Caco-2 (cell line): ENCODE measurements at regions of chr1 and their contacts with region 1.

Region 1: DNA sequence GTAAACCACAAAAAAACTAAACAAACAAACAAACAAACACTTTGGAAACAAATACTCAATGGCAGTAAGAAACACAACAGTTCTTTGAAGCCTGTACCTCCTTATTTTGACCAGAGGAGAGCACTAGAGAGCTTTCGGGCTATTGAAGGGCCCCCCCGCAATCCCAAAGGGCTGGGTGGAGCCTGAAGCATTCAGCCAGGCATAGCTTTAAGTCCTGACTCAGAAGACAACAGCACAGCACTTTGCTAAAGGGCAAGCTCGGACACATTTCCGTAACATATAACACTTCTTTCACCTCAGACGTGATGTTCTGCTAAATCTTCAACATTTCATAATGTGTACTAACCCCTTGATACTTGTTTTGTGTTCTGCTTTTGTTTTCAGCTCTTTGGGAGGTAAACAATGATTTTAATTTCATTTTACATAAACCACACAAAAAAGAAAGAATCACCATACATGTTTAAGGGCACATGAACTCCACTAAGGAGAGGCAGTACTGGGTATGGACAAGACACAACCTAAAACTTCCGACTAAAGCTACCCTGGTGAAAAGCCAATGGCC is 9.7 kb upstream of the SHCBP1L start:
- DNase-seq: peak; percentile 78 to 81
- H3K4me3 ChIP-seq: peak overlapping the region; percentile 21; the same call in 1 of the 2 replicates
- H3K4me3 Mint-ChIP-seq: peak overlapping the region; percentile 55
- H3K27ac Mint-ChIP-seq: peak overlapping the region; percentile 58
- H3K4me1 ChIP-seq: peaks cover 36% of the 10 kb centered on the region
- H3K4me1 Mint-ChIP-seq: peaks cover 14% of the 10 kb centered on the region
- H3K27me3 ChIP-seq: no peaks in the 10 kb centered on the region
- H3K27me3 Mint-ChIP-seq: no peaks in the 10 kb centered on the region
- CTCF ChIP-seq: peak; percentile 90 to 93

Region 2: GRCh38 chr1:182731852-182732545 is 230.6 kb before region 1 on chr1:
- CTCF ChIA-PET with region 1: no interaction called
- POLR2A ChIA-PET with region 1: no interaction called
- intact Hi-C with region 1: no loop called
- DNase-seq: peak in 1 of 2 experiments; percentile 18
- H3K4me3 ChIP-seq: no peak overlapping the region
- H3K4me3 Mint-ChIP-seq: no peak overlapping the region
- H3K27ac Mint-ChIP-seq: no peak overlapping the region
- H3K4me1 ChIP-seq: no peaks in the 10 kb centered on the region
- H3K4me1 Mint-ChIP-seq: peaks cover 7% of the 10 kb centered on the region
- H3K27me3 ChIP-seq: no peaks in the 10 kb centered on the region; the same call in 1 of the 2 replicates
- H3K27me3 Mint-ChIP-seq: peaks cover 4% of the 10 kb centered on the region
- CTCF ChIP-seq: no peak

Region 3: DNA sequence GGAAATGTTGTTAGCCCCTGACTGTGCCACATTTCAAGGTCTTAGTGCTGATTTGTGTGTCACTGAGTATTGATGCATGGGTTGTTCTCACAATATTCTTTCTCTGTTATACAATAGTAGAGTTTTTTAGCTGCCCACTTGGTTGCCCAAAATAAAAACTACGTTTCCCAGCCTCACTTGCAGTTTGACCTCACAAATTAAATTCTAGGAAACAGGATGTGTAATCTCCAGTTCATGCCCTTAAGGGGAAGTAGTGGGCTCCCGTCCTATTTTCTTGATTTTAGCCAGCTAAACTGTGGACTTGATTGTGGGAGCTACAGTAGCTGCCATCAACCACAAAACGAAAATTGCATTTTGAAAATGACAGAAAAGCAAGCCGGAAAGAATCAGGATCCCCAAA is 33.3 kb after region 1 on chr1:
- CTCF ChIA-PET with region 1: no interaction called
- POLR2A ChIA-PET with region 1: no interaction called
- intact Hi-C with region 1: no loop called
- DNase-seq: no peak
- H3K4me3 ChIP-seq: no peak overlapping the region
- H3K4me3 Mint-ChIP-seq: no peak overlapping the region
- H3K27ac Mint-ChIP-seq: no peak overlapping the region
- H3K4me1 ChIP-seq: peaks cover 5% of the 10 kb centered on the region; the same call in 1 of the 2 replicates
- H3K4me1 Mint-ChIP-seq: no peaks in the 10 kb centered on the region
- H3K27me3 ChIP-seq: no peaks in the 10 kb centered on the region
- H3K27me3 Mint-ChIP-seq: no peaks in the 10 kb centered on the region
- CTCF ChIP-seq: no peak

Region 4: DNA sequence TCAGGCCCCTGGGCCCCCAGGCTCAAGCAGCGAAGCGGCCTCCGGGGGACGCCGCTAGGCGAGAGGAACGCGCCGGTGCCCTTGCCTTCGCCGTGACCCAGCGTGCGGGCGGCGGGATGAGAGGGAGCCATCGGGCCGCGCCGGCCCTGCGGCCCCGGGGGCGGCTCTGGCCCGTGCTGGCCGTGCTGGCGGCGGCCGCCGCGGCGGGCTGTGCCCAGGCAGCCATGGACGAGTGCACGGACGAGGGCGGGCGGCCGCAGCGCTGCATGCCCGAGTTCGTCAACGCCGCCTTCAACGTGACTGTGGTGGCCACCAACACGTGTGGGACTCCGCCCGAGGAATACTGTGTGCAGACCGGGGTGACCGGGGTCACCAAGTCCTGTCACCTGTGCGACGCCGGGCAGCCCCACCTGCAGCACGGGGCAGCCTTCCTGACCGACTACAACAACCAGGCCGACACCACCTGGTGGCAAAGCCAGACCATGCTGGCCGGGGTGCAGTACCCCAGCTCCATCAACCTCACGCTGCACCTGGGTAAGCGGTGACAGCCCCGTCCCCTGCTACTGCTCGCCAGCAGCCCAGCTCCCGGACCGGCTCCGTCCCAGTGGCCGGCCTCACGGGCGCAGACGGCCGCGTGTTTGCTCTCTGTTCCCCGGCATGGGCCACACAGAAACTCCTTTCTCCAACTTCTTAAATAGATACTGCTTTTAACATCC is 61.1 kb after region 1 on chr1:
- CTCF ChIA-PET with region 1: interaction called, 16 read pairs
- POLR2A ChIA-PET with region 1: interaction called, 3 read pairs
- intact Hi-C with region 1: loop called (anchors 1 kb)
- DNase-seq: peak; percentile 93
- H3K4me3 ChIP-seq: peak overlapping the region; percentile 92
- H3K4me3 Mint-ChIP-seq: peak overlapping the region; percentile 97
- H3K27ac Mint-ChIP-seq: peak overlapping the region; percentile 90
- H3K4me1 ChIP-seq: peaks cover 50% of the 10 kb centered on the region
- H3K4me1 Mint-ChIP-seq: peaks cover 33% of the 10 kb centered on the region
- H3K27me3 ChIP-seq: no peaks in the 10 kb centered on the region
- H3K27me3 Mint-ChIP-seq: no peaks in the 10 kb centered on the region
- CTCF ChIP-seq: peak; percentile 50 to 85

Region 5: DNA sequence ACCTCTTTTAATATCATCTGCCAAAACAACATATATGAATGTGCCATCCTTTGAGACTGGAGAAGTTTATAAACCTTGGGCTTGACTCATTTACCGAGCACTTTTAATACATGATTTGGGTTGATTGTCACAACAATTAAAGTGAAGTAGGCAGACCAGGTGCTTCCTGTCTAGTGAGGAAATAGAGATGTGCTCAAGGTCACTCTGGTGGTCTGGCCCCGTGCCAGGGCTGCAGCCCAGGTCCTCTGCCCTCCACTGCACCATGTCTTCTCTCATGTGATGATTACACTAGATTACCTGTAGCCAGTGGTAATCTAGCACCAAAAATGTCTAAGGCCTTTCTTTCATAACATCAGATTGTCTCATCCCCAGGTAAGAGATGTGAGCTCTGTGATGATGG is 161.6 kb after region 1 on chr1:
- CTCF ChIA-PET with region 1: no interaction called
- POLR2A ChIA-PET with region 1: interaction called, 3 read pairs
- intact Hi-C with region 1: loop called (anchors 1 kb)
- DNase-seq: no peak
- H3K4me3 ChIP-seq: no peak overlapping the region
- H3K4me3 Mint-ChIP-seq: no peak overlapping the region
- H3K27ac Mint-ChIP-seq: no peak overlapping the region
- H3K4me1 ChIP-seq: peaks cover 20% of the 10 kb centered on the region
- H3K4me1 Mint-ChIP-seq: peaks cover 19% of the 10 kb centered on the region
- H3K27me3 ChIP-seq: no peaks in the 10 kb centered on the region
- H3K27me3 Mint-ChIP-seq: no peaks in the 10 kb centered on the region
- CTCF ChIP-seq: no peak

Region 6: GRCh38 chr1:183185941-183186490 is 223.4 kb after region 1 on chr1 and contains the start of gene LAMC2:
- CTCF ChIA-PET with region 1: no interaction called
- POLR2A ChIA-PET with region 1: no interaction called
- intact Hi-C with region 1: loop called (anchors 1 kb)
- DNase-seq: peak; percentile 90
- H3K4me3 ChIP-seq: peak within 1 kb of the TSS; percentile 69
- H3K4me3 Mint-ChIP-seq: peak within 1 kb of the TSS; percentile 87
- H3K27ac Mint-ChIP-seq: peak within 1 kb of the TSS; percentile 89
- H3K4me1 ChIP-seq: peaks cover 17% of the 10 kb centered on the region
- H3K4me1 Mint-ChIP-seq: peaks cover 13% of the 10 kb centered on the region
- H3K27me3 ChIP-seq: no peaks in the 10 kb centered on the region
- H3K27me3 Mint-ChIP-seq: no peaks in the 10 kb centered on the region
- CTCF ChIP-seq: peak; percentile 61 to 73
- total RNA-seq, gene LAMC2: 34.9 and 51.0 TPM in 2 replicates

Region 7: DNA sequence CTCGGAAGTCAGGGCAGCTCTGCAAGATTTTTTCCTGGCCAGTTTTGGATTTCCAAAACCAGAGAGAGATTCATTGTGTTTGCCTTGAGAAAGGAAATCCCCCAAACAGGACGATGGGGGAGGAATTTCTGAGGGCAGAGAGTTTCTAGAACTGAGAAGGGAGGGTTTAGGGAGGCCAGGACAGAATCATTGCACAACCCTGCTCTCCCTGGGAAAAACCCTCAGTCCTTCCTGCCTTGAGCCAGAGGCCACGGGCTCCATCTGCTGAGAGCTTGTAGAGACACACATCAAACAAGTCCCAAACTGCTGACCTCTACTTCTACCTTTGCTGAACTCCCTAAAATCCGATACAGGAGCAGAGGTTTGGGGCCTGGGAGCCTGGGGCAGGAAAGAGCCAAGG is 355.8 kb after region 1 on chr1:
- CTCF ChIA-PET with region 1: no interaction called
- POLR2A ChIA-PET with region 1: no interaction called
- intact Hi-C with region 1: loop called (anchors 1 kb)
- DNase-seq: peak; percentile 57 to 67
- H3K4me3 ChIP-seq: no peak overlapping the region
- H3K4me3 Mint-ChIP-seq: no peak overlapping the region
- H3K27ac Mint-ChIP-seq: no peak overlapping the region
- H3K4me1 ChIP-seq: 0 out of 2 replicates have a peak, but pooled peaks cover 7% of the 10 kb centered on the region
- H3K4me1 Mint-ChIP-seq: peaks cover under 1% of the 10 kb centered on the region
- H3K27me3 ChIP-seq: no peaks in the 10 kb centered on the region
- H3K27me3 Mint-ChIP-seq: no peaks in the 10 kb centered on the region
- CTCF ChIP-seq: peak; percentile 51 to 66